ENCODE measurements at regions of chr10 and their contacts with region 1.

Region 1: DNA sequence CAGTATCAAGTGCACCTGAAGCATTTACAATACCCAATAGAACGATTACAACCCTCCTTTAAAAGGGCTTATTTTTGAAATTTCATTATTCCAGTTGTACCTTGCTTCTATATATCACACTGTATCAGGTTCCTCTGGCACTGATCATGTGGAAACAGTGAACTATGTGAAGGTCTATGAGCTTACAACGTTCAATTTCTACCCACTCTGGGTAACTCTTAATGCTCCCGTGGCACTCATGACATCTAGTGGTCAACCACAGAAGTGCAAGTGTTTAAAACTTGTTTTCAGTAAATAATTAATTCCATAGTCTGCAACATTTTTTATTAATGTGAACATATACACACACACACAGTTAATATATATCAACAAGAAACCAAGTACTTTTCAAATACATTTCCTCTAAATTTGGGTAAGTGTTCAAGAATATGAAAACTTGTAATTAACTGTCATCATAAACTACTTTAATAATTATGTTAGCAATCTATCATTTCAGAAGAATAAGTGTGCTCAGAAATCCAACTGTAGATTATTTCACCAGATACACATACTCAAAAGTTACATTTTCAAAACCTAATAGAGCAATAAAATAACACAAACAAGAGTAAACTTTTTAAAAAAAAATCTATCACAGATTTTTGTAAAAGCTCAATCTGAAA is 61.0 kb downstream of the MPP7 start:
- DNase-seq: no peak

Region 2: DNA sequence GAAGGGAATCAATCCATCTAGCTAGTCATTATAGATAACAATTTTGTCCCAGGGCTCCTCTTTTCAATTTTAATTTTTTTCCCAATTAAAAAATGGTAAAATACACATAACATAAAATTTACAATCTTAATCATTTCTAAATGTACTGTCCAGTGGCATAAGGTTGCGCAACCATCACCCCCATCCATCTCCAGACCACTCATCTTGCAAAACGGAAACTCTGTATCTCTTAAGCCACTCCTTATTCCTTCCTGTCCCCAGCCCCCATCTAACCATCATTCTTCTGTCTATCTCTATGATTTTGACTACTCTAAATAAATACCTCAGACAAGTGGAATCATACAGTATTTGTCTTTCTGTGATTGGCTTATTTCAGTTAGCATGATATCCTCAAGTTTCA is 783.9 kb before region 1 on chr10:
- intact Hi-C with region 1: loop called (anchors 10 kb)
- DNase-seq: no peak

Region 3: GRCh38 chr10:27558612-27559020 is 683.3 kb before region 1 on chr10:
- intact Hi-C with region 1: loop called (anchors 10 kb)
- DNase-seq: no peak

Region 4: DNA sequence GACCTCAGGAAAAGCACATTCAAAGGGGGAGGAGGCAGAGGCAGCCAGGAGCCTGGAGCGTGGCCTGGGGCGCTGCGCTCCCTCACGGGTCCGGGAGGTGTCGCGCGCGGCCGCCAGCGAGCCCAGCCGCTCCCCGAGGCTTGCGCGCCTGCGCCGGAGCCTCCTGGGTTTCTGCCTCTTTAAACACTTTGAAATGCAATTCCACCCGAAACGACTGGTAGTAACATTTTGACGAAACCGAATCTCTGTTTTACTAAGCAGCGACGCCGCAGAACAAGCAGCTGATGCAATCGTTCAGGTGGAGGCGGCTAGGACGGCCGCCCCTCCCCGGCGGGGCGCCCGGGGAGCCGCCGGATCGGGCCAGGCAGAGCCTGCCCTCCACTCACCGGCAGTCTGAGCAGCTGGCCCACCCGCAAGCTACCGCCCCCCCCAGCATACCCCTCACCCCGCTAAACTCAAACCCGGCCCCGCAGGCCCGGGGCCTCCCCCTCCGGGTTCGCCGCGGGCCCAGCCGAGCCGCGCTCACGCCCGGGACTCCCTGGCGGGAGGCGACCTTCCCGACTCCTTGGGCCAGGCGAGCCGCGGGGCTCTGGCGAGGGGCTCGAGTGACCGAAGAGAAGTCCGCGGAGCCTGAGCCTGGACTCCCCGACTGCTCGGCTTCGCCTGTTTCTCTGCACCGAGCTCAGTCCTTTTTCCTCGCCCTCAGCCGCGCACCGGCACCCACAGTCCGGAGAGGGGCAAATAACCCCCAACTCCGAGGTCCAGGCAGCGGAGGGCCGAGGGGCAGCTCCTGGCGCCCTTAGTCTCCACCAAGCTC is 499.5 kb before region 1 on chr10:
- intact Hi-C with region 1: loop called (anchors 5 kb)
- DNase-seq: peak; percentile 84

Region 5: DNA sequence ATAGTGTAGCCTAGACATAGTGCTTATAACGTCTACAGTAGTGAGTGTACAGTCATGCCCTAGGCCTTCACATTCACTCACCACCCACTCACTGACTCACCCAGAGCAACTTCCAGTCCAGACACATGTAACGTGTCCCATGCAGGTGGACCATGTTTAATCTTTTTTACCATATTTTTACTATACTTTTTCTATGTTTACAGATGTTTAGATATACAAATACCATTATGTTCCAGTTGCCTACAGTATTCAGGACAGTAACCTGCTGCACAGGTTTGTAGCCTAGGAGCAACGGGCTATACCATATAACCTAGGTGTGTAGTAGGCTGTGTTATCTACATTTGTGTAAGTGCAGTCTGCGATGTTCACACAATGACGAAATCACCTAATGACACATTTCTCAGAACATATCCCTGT is 50.0 kb after region 1 on chr10:
- intact Hi-C with region 1: no loop called
- DNase-seq: no peak

Measured in cardiac septum (tissue), 1 donor.